ENCODE measurements at regions of chr19 and their contacts with region 1.

Region 1: GRCh38 chr19:2950286-2951124 is 5.7 kb upstream of the ZNF77 start:
- DNase-seq: peak; percentile 99
- ATAC-seq: peak; percentile 96
- H3K4me3 ChIP-seq: peak overlapping the region; percentile 90 to 91
- H3K27ac ChIP-seq: peak overlapping the region; percentile 70
- H3K4me1 ChIP-seq: peaks cover 12 to 25% of the 10 kb centered on the region in 2 experiments; a peak in 3 of 4 replicates
- H3K27me3 ChIP-seq: no peaks in the 10 kb centered on the region
- CTCF ChIP-seq: no peak
- POLR2A ChIP-seq: peak; percentile 65
- RAD21 ChIP-seq: no peak

Region 2: GRCh38 chr19:2648528-2648937 is 302.0 kb before region 1 on chr19:
- CTCF ChIA-PET with region 1: interaction called, 34 read pairs
- POLR2A ChIA-PET with region 1: interaction called, 6 read pairs
- RAD21 ChIA-PET with region 1: interaction called in 1 of 2 experiments, 3 read pairs
- intact Hi-C with region 1: loop called (anchors 1 kb)
- DNase-seq: peak; percentile 51
- ATAC-seq: peak; percentile 98
- H3K4me3 ChIP-seq: no peak overlapping the region
- H3K27ac ChIP-seq: no peak overlapping the region
- H3K4me1 ChIP-seq: peaks cover 0 to under 1% of the 10 kb centered on the region in 2 experiments; a peak in 1 of 4 replicates
- H3K27me3 ChIP-seq: no peaks in the 10 kb centered on the region
- CTCF ChIP-seq: peak; percentile 76 to 96 (median 95)
- POLR2A ChIP-seq: no peak
- RAD21 ChIP-seq: peak; percentile 99

Region 3: DNA sequence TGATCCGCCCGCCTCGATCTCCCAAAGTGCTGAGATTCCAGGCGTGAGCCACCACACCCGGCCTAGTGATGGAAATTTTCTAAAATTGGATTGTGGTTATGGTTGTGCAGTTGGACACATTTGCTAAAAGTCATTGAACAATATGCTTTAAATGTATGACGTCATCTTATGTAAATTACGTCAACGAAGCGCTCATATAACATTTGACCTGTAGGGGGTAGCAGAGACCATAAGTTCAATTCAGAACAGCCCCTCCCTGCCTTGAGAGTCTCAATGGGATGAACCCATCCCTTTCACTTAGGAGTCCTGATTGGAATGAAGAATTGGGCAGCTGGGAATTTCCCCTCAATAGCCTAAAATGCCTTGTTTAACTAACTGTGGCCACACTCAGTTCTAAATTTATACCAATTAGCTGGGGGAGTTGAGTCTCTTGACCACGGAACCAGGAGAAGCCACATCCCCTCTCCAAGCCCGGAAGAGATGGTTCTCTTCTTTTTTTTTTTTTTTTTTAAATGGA is 11.6 kb after region 1 on chr19:
- CTCF ChIA-PET with region 1: interaction called, 19 read pairs
- POLR2A ChIA-PET with region 1: interaction called, 5 read pairs
- RAD21 ChIA-PET with region 1: interaction called in 1 of 2 experiments, 4 read pairs
- intact Hi-C with region 1: no loop called
- DNase-seq: peak; percentile 68
- ATAC-seq: peak; percentile 70
- H3K4me3 ChIP-seq: no peak overlapping the region
- H3K27ac ChIP-seq: no peak overlapping the region
- H3K4me1 ChIP-seq: no peaks in the 10 kb centered on the region; a peak in 1 of 4 replicates
- H3K27me3 ChIP-seq: no peaks in the 10 kb centered on the region
- CTCF ChIP-seq: peak; percentile 53 to 85 (median 77)
- POLR2A ChIP-seq: no peak
- RAD21 ChIP-seq: peak; percentile 92

Region 4: DNA sequence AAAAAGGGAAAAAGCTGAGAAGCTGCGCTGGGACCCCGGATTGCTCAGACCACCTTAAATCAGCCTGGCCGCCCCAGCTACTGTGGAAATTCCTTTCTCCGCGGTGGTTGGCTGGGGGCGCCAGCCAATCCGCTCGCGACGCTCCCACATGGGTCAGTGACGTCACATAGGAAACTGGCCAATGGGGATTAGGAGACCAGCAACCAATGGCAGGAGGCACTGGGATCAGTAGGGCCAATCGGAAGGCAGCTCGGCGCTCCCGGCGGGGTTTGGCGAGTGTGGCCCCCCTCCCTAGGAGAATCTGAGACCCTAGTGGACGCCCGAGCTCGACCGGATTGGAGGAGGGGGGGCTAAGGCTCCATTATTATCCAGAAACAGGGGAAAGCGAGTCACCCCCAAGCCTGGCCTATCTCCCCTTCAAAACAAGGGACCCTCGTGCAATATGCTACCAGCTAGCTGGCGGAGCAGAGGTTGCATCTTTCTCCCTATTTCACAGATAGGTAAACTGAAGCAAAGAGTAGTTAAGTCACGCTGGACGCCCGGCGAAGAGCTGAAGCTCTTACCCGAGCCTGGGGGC is 85.1 kb after region 1 on chr19:
- CTCF ChIA-PET with region 1: interaction called, 20 read pairs
- POLR2A ChIA-PET with region 1: interaction called, 8 read pairs
- RAD21 ChIA-PET with region 1: interaction called, 3 to 4 read pairs
- intact Hi-C with region 1: no loop called
- DNase-seq: peak; percentile 99
- ATAC-seq: peak; percentile 82
- H3K4me3 ChIP-seq: peak overlapping the region; percentile 53 to 70
- H3K27ac ChIP-seq: peak overlapping the region; percentile 94
- H3K4me1 ChIP-seq: peaks cover 34 to 61% of the 10 kb centered on the region in 2 experiments
- H3K27me3 ChIP-seq: no peaks in the 10 kb centered on the region; the same call in 1 of the 2 replicates
- CTCF ChIP-seq: no peak
- POLR2A ChIP-seq: peak; percentile 28
- RAD21 ChIP-seq: no peak

Region 5: GRCh38 chr19:3108775-3109174 is 158.3 kb after region 1 on chr19:
- CTCF ChIA-PET with region 1: interaction called, 31 read pairs
- POLR2A ChIA-PET with region 1: interaction called, 6 read pairs
- RAD21 ChIA-PET with region 1: interaction called in 1 of 2 experiments, 5 read pairs
- intact Hi-C with region 1: no loop called
- DNase-seq: no peak
- ATAC-seq: peak; percentile 77
- H3K4me3 ChIP-seq: no peak overlapping the region
- H3K27ac ChIP-seq: no peak overlapping the region
- H3K4me1 ChIP-seq: peaks cover 3 to 5% of the 10 kb centered on the region in 2 experiments; a peak in 3 of 4 replicates
- H3K27me3 ChIP-seq: no peaks in the 10 kb centered on the region
- CTCF ChIP-seq: peak; percentile 49 to 95 (median 89); a peak in 5 of 6 replicates
- POLR2A ChIP-seq: no peak
- RAD21 ChIP-seq: no peak

Region 6: GRCh38 chr19:3275583-3276340 is 325.3 kb after region 1 on chr19:
- CTCF ChIA-PET with region 1: interaction called, 23 read pairs
- POLR2A ChIA-PET with region 1: interaction called, 6 read pairs
- RAD21 ChIA-PET with region 1: interaction called in 1 of 2 experiments, 5 read pairs
- intact Hi-C with region 1: loop called (anchors 5 kb)
- DNase-seq: peak; percentile 92
- ATAC-seq: peak; percentile 80
- H3K4me3 ChIP-seq: peak overlapping the region; percentile 50 to 61
- H3K27ac ChIP-seq: peak overlapping the region; percentile 86
- H3K4me1 ChIP-seq: peaks cover 13 to 24% of the 10 kb centered on the region in 2 experiments
- H3K27me3 ChIP-seq: no peaks in the 10 kb centered on the region
- CTCF ChIP-seq: peak in 2 of 3 experiments; percentile 83 to 99
- POLR2A ChIP-seq: peak; percentile 23
- RAD21 ChIP-seq: no peak

Measured in HCT116 (cell line).